ENCODE measurements at regions of chr5 and their contacts with region 1.

Region 1: DNA sequence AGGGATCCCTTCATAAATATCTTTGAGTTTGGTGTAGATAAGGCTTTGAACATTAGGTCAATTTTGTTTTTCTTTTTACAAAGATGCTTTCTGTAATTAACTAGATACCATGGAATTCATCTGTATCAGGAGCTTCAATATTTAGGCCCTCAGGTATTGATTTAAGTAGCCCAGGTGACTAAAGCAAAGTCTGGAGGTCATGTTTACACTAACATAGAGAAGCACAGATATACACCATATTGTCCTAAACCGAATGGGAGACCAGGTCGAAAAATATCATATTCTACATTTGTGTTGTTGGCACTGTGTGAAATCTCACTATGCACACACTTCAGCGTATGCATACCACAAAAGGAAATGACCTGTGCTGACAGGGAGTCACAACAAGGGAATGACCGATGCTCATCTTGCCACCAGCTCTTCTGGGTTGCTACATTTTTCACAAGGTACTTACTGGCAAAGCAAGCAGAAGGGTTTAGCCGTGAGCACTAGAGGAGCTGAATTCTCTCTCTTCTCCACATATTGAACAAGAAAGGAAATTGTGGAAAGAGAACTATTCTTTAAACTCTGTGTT is 98.5 kb upstream of the IL7R start:
- H3K4me3 ChIP-seq: no peak overlapping the region
- H3K27ac ChIP-seq: no peak overlapping the region
- H3K4me1 ChIP-seq: no peaks in the 10 kb centered on the region
- CTCF ChIP-seq: no peak

Region 2: DNA sequence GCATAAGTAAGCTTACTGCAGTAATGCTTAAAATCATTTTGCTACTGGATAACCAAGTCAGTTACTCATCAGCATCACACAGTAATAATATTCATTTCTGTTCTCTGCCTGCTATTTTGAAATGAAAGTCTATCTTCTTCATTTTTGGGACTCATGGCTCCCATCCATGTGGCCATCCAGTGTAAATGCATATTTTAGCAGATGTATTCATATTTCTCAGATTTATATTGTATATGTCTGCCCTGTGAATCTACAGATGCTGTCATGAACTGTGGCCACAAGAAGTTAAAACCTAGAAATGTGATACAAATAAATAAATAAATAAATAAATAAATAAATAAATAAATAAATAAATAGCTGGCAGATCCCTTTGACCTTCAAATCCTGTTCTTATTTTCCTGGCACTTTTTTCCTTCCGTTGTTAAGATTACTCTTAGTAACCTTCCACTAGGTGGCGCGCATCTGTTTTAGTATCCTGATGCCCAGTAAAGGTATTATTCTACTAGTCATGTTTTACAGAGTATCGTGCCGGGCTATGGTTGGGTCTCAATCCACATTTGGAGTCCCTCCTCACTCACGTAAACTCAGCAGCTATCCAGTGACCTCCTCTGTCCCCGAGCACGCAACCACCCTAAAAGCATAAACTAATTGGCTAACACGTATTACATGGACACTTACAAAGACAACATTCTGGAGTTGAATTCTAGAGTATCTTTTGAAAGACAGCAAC is 19.3 kb after region 1 on chr5:
- CTCF ChIA-PET with region 1: interaction called, 10 read pairs
- POLR2A ChIA-PET with region 1: no interaction called
- H3K4me3 ChIP-seq: no peak overlapping the region
- H3K27ac ChIP-seq: no peak overlapping the region
- H3K4me1 ChIP-seq: no peaks in the 10 kb centered on the region
- CTCF ChIP-seq: no peak